ENCODE measurements at regions of chr9 and their contacts with region 1.

Region 1: GRCh38 chr9:109975574-109976295 is 195.7 kb downstream of the PALM2AKAP2 start:
- DNase-seq: no peak
- H3K4me3 ChIP-seq: no peak overlapping the region
- H3K27ac ChIP-seq: no peak overlapping the region
- H3K4me1 ChIP-seq: no peaks in the 10 kb centered on the region
- H3K27me3 ChIP-seq: no peaks in the 10 kb centered on the region
- CTCF ChIP-seq: no peak
- EP300 ChIP-seq: no peak
- POLR2A ChIP-seq: no peak

Region 2: DNA sequence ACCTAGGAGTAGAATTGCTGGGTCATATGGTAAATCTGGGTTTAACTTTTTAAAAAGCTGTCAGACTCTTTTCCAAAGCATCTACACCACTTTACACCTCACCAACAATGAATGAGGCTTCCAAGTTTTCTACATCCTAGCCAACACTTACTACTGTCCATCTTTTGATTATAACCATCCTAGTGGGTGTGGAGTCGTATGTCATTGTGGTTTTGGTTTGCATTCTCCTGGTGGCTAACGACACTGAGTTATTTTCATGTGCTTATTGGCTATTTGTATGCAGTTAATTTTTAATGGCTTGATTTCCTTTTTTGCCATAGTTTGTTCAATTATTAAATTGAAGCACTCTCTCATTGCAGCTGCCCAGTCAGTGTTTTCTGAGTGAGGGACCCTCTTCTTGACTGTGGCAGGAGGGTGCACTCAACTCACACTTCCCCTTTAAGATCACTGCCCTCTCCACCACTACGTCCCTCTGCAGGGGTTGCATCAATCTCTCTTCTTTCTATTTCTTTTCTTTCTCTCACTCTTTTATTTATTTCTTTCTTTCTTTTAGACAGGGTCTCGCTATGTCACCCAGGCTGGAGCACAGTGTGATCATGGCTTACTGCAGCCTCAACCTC is 49.9 kb after region 1 on chr9:
- intact Hi-C with region 1: loop called in 1 of 4 experiments (anchors 2 kb)
- DNase-seq: no peak
- H3K4me3 ChIP-seq: no peak overlapping the region
- H3K27ac ChIP-seq: no peak overlapping the region
- H3K4me1 ChIP-seq: no peaks in the 10 kb centered on the region
- H3K27me3 ChIP-seq: no peaks in the 10 kb centered on the region
- CTCF ChIP-seq: no peak
- EP300 ChIP-seq: no peak
- POLR2A ChIP-seq: no peak

Region 3: DNA sequence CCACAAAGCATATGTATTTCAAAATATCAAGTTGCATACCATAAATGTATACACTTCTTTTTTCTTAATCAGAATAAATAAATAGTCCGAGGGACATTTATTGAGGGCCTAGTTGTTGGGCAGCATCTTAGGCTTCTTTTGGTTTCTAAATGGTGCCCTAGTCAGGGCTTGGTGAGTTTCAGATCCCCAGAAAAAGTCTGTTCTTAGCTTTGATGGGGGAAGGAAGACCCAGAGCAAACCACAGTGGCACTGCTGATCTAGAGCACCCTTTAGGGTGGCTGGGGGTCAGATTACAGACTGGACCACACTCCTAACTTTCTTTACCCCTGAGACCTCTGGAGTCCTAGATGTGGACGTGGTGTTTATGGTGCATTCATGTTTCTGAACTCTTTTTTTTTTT is 134.4 kb after region 1 on chr9:
- intact Hi-C with region 1: no loop called
- DNase-seq: no peak
- H3K4me3 ChIP-seq: no peak overlapping the region
- H3K27ac ChIP-seq: no peak overlapping the region
- H3K4me1 ChIP-seq: peaks cover 4% of the 10 kb centered on the region
- H3K27me3 ChIP-seq: no peaks in the 10 kb centered on the region
- CTCF ChIP-seq: no peak
- EP300 ChIP-seq: no peak
- POLR2A ChIP-seq: no peak

Region 4: DNA sequence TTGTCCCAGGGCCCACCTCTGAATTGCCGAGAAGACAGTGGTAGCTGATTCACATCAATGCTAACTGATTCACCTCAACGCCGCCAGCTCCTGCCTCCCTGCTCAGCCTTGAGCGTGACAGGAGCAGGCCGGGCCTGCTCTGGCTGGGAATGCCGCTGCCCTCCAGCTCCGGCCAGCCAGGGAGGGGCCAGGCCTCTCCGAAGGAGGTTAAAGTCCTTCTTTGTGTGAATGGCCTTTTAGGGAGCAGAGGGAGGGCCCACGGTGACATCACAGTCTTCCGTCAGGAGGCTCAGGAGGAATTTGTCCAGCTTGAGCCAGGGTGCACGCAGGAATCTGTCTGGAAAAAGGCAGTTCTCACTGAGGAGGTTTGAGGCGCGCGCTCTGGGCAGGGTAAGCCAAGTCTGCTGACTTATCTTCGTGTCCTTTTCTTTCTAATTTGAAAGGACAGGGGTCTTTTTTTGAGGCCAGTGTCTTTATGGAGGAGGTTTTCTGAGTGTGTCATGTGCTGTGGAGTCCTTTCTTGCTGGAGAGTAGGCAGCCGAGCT is 149.5 kb after region 1 on chr9:
- intact Hi-C with region 1: no loop called
- DNase-seq: peak; percentile 82 to 90 (median 88)
- H3K4me3 ChIP-seq: peak overlapping the region; percentile 17
- H3K27ac ChIP-seq: peak overlapping the region; percentile 81 to 84
- H3K4me1 ChIP-seq: peaks cover 29% of the 10 kb centered on the region
- H3K27me3 ChIP-seq: no peaks in the 10 kb centered on the region
- CTCF ChIP-seq: no peak
- EP300 ChIP-seq: peak; percentile 36
- POLR2A ChIP-seq: peak; percentile 49

Measured in ovary (tissue), 10 donors.